ENCODE measurements at regions of chr22 and their contacts with region 1.

Region 1: GRCh38 chr22:39319270-39320022 is at the start of gene RPL3:
- DNase-seq: peak; percentile 96
- H3K4me3 Mint-ChIP-seq: peak within 1 kb of the TSS; percentile 95
- H3K27ac Mint-ChIP-seq: peak within 1 kb of the TSS; percentile 100
- H3K4me1 Mint-ChIP-seq: peaks cover 43% of the 10 kb centered on the region
- H3K27me3 Mint-ChIP-seq: no peaks in the 10 kb centered on the region
- total RNA-seq, gene RPL3: 1,621 to 1,780 TPM

Region 2: GRCh38 chr22:39170825-39171622 is 148.4 kb before region 1 on chr22:
- CTCF ChIA-PET with region 1: interaction called, 36 read pairs
- POLR2A ChIA-PET with region 1: interaction called, 4 read pairs
- DNase-seq: peak; percentile 82
- H3K4me3 Mint-ChIP-seq: peak overlapping the region; percentile 62
- H3K27ac Mint-ChIP-seq: peak overlapping the region; percentile 82
- H3K4me1 Mint-ChIP-seq: peaks cover 56% of the 10 kb centered on the region
- H3K27me3 Mint-ChIP-seq: peaks cover 2% of the 10 kb centered on the region

Region 3: DNA sequence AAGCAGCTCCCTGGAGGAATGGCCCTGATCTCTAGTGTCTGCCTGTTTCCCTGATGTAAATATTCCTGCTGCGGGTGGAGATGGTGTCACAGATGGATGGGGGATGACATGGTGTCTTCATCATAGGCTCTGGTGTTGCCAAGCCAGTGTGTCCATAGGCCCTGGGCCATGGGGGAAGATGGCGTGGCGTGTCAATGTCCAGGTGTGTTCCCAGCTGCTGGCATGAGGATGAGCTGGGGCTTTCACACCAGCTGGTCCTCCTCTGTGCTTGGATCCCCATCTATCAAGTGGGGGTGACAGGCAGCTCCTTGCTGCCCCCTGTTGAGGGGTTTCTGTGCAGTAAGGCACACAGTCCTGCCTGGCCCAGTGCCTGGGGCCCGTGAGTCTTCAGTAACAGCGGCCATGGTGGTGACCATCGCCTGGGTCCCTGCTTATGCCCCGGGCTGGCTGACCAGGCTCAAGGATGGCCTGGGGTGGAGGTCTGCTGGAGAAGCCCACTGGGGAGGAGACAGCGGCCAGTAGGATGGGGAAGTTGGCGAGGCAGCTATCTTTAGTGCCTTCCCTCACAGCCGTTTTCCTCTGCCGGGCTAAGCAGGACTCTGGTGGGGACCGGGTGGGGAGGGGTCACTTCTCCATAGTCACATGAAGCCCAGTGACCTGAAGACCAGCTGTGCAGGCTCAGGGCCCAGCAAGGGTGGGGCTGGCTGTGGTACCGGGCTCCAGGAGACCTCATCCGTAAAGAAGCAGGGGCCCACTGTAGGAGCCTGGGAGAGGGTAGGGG is 12.7 kb before region 1 on chr22:
- CTCF ChIA-PET with region 1: interaction called, 20 read pairs
- POLR2A ChIA-PET with region 1: no interaction called
- DNase-seq: peak; percentile 64
- H3K4me3 Mint-ChIP-seq: no peak overlapping the region
- H3K27ac Mint-ChIP-seq: no peak overlapping the region
- H3K4me1 Mint-ChIP-seq: peaks cover 17% of the 10 kb centered on the region
- H3K27me3 Mint-ChIP-seq: no peaks in the 10 kb centered on the region

Region 4: GRCh38 chr22:39428578-39429071 is 109.2 kb after region 1 on chr22:
- CTCF ChIA-PET with region 1: no interaction called
- POLR2A ChIA-PET with region 1: no interaction called
- DNase-seq: no peak
- H3K4me3 Mint-ChIP-seq: no peak overlapping the region
- H3K27ac Mint-ChIP-seq: no peak overlapping the region
- H3K4me1 Mint-ChIP-seq: no peaks in the 10 kb centered on the region
- H3K27me3 Mint-ChIP-seq: no peaks in the 10 kb centered on the region

Region 5: GRCh38 chr22:39520054-39520891 is 200.8 kb after region 1 on chr22 and contains the start of gene ATF4:
- CTCF ChIA-PET with region 1: interaction called, 3 read pairs
- POLR2A ChIA-PET with region 1: interaction called, 10 read pairs
- DNase-seq: peak; percentile 98
- H3K4me3 Mint-ChIP-seq: peak within 1 kb of the TSS; percentile 86
- H3K27ac Mint-ChIP-seq: peak within 1 kb of the TSS; percentile 97
- H3K4me1 Mint-ChIP-seq: peaks cover 64% of the 10 kb centered on the region
- H3K27me3 Mint-ChIP-seq: peaks cover 1% of the 10 kb centered on the region
- total RNA-seq, gene ATF4: 372 to 437 TPM

Measured in activated CD4-positive, alpha-beta T cell treated with anti-CD3 and anti-CD28 coated beads, Interleukin-2, amount 10 ng/mL, durations not matched to agents 7 days and 5 days (primary cell).